Sciatic nerve (tissue), 2 donors: ENCODE measurements at regions of chr12 and their contacts with region 1.

Region 1: DNA sequence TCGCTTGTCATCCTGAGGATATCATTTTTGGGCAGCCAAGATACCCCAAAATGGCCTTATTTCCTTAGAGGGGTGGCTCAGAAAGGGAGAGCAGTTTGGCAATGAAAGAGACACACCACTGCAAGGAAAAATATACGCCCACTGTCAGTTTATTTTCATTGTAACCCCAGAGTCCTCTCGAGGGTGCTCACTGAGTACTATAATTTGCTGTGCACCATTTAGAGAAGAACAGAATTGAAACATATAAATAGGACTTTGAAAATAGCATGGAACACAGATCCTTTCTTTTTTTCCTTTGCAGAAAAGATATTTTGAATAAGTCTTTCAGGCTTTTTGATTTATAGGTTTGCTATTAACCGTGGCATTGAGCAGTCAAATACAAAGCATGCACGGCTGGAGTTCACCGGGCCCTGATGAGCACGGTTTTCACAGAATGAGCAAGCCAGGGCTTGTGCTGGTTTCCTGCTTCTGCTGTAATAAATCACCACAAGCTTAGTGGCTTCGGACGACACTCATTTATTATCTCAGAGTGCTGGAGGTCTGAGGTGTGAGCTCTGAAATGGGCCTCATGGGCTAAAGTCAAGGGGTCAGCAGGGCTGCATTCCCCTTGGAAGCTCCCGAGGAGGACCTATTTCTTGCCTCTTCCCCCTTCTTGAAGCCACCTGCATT is 152.3 kb downstream of the ZNF664 start:
- DNase-seq: no peak
- ATAC-seq: no peak

Region 2: GRCh38 chr12:123822804-123823203 is 302.5 kb before region 1 on chr12:
- intact Hi-C with region 1: loop called (anchors 5 kb)
- DNase-seq: no peak
- ATAC-seq: no peak